ENCODE measurements at regions of chr12 and their contacts with region 1.

Region 1: GRCh38 chr12:109477185-109477962 is at the starts of genes KCTD10 and UBE3B:
- DNase-seq: peak; percentile 86
- H3K4me3 ChIP-seq: peak within 1 kb of the TSS; percentile 91 to 97 (median 92)
- H3K27ac ChIP-seq: peak within 1 kb of the TSS; percentile 98
- H3K4me1 ChIP-seq: peaks cover 19% of the 10 kb centered on the region
- H3K27me3 ChIP-seq: no peaks in the 10 kb centered on the region
- CTCF ChIP-seq: no peak
- POLR2A ChIP-seq: peak; percentile 79
- total RNA-seq, gene KCTD10: 92.8 and 101 TPM in 2 replicates
- total RNA-seq, gene UBE3B: 32.7 and 40.8 TPM in 2 replicates

Region 2: DNA sequence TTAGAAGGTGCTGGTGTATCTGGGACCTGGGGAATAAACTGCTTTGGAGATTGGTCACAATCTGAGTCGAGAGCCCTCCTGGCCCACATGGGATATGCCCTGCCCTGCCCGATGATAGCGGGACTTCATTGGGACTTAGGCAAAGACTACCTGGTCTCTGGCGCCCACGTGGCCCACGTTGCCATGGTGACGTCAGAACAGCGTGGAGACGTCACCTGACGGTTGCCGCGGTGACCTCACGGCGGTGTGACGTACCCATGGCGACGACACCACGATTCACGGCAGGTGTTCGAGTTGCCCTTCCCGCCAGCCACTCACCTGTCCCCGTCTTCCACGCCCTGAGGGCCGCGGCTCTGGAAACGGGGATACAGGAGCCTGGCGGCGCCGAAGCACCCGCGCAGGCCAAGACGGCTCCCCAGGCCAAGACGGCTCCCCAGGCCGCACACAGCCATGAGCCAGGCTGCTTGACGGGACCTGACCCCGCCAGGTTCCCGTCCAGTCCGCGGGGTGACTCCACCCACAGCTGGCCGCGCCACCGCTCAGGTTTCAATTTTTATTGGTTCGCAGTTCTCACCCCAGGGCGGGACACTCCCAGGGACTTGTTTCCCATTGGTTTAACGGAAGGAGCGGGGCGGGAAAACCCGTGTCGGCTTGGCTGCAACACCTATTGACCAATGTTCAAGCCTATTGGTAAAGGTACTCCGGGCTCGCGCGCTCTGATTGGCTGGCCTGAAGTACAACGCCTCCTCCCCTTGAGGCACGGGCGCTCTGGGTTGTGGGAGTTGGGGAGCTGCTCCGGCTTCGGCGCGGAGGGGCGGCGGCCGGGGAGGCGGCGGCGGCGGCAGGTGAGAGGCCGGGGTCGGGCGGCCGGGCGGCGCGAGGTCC is 95.9 kb after region 1 on chr12 and contains the starts of genes MMAB and MVK:
- CTCF ChIA-PET with region 1: no interaction called
- POLR2A ChIA-PET with region 1: no interaction called
- dilution Hi-C with region 1: no loop called
- intact Hi-C with region 1: loop called (anchors 5 kb)
- DNase-seq: peak; percentile 99
- H3K4me3 ChIP-seq: peak within 1 kb of the TSS; percentile 27 to 83 (median 82)
- H3K27ac ChIP-seq: peak within 1 kb of the TSS; percentile 42
- H3K4me1 ChIP-seq: peaks cover 16% of the 10 kb centered on the region
- H3K27me3 ChIP-seq: no peaks in the 10 kb centered on the region
- CTCF ChIP-seq: no peak
- POLR2A ChIP-seq: peak; percentile 73
- total RNA-seq, gene MMAB: 45.9 and 46.0 TPM in 2 replicates
- total RNA-seq, gene MVK: 40.3 and 42.6 TPM in 2 replicates